ENCODE measurements at regions of chr14 and their contacts with region 1.

Region 1: GRCh38 chr14:22131749-22132476 is 457.1 kb downstream of the DAD1 start:
- DNase-seq: peak; percentile 47
- ATAC-seq: peak; percentile 34
- H3K4me3 Mint-ChIP-seq: no peak overlapping the region
- H3K27ac Mint-ChIP-seq: no peak overlapping the region
- H3K4me1 Mint-ChIP-seq: peaks cover 5% of the 10 kb centered on the region
- H3K27me3 Mint-ChIP-seq: no peaks in the 10 kb centered on the region
- CTCF ChIP-seq: peak; percentile 34

Region 2: DNA sequence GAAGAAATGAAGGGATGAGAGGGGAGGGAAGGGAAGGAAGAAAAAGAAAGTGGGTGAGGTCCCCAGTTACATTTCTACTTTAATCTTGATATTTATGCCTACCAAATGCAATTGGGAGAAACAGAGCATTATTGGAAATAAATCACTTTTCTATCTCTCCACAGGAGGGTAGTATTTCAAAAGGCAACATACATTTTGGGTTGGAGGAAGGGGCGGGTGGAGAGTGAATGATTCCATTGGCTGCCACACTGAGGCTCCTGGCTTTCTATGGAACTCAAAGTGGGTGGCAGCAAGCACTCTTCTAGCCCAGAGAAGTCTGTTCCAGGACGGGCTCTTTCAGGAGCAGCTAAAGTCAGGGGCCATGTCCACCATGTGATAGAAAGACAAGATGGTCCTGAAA is 15.8 kb after region 1 on chr14:
- CTCF ChIA-PET with region 1: interaction called, 23 read pairs
- POLR2A ChIA-PET with region 1: interaction called, 12 read pairs
- intact Hi-C with region 1: no loop called
- DNase-seq: peak; percentile 26
- ATAC-seq: peak; percentile 68
- H3K4me3 Mint-ChIP-seq: peak overlapping the region; percentile 75
- H3K27ac Mint-ChIP-seq: peak overlapping the region; percentile 86
- H3K4me1 Mint-ChIP-seq: peaks cover 4% of the 10 kb centered on the region
- H3K27me3 Mint-ChIP-seq: no peaks in the 10 kb centered on the region
- CTCF ChIP-seq: no peak